ENCODE measurements at regions of chr10 and their contacts with region 1.

Region 1: DNA sequence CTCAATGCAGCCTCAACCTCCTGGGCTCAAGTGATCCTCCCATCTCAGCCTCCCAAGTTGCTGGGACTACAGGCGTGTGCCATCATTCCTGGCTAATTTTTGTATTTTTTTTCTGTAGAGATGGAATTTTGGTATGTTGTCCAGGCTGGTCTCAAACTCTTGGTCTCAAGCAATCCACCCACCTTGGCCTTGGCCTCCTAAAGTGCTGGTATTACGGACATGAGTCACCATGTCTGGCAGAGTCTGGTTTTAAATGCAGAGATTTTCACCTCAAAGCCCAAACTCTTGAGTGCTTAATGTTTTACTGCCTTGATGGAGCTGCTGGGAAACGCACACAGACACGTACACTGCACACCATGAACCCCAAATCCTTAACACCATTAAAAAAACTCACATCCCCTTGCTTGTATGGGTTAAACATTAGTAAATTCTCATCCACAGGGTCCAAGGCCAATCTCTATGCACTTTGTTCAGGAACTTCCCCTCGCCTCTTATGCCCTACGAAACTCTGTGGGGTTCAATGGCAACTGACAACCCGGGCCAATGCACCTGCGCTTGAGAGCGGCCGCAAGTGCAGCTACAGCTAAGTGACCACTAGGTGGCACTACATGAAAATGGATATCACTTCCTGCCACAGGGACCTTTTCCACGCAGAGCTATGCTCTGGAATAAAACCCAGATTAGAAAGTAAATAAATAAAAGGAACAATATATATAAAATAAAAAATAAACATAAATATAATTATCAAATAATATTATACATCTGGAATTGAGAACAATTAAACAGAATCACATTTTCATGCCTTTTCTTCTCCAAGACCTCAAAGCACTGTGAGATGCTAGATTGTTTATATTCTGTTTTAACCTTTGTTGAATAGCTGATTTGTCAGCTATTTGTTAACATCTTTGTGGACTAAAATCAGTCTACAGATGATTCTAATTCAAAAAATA is 66.9 kb upstream of the AFAP1L2 start:
- DNase-seq: peak; percentile 54
- H3K4me3 Mint-ChIP-seq: no peak overlapping the region
- H3K27ac Mint-ChIP-seq: no peak overlapping the region
- H3K4me1 Mint-ChIP-seq: peaks cover 31% of the 10 kb centered on the region
- H3K27me3 Mint-ChIP-seq: no peaks in the 10 kb centered on the region

Region 2: GRCh38 chr10:113866551-113867394 is 604.5 kb before region 1 on chr10:
- intact Hi-C with region 1: no loop called
- DNase-seq: no peak
- H3K4me3 Mint-ChIP-seq: no peak overlapping the region
- H3K27ac Mint-ChIP-seq: no peak overlapping the region
- H3K4me1 Mint-ChIP-seq: peaks cover 4% of the 10 kb centered on the region
- H3K27me3 Mint-ChIP-seq: no peaks in the 10 kb centered on the region

Region 3: DNA sequence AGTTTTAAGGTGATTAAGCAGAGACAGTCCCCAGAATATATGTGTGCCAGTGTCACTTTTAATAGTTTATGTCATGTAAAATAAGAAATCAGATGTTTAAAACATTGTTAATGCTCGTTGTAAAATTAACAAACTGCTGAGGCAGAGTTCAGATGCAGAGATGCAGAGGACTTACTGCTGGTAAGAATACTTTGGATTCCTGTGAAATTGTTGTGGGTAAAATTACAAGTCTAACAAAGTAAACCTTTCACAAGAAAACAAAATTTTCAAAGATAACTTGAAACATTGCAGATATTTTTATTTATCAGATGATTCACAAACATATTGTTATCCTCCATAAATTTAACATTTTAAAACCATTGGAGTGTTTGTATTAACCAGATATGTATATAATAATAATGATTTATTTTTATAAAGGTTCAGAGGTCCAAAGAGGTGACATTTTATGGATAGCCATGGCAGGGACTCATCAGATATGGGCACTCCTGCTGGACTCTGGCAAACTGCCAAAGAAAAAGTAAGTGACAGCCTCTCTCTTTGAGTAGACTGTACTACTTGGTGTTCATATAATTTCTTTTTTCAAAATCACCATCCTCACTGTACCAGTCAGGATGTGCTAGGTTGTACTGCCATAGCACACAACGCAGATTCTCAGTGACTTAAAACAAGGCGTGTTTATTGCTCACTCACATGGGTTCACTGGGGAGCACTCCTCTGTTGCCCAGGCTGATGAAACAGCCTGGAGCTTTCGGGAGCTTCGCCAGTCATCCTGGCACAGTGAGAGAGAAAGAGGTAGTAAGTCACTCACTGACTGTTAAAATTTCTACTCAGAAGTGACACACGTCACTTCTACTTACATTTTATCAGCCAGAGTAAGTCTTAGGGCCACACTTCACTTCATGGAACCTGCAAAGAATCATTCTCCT is 573.3 kb before region 1 on chr10:
- intact Hi-C with region 1: no loop called
- DNase-seq: no peak
- H3K4me3 Mint-ChIP-seq: no peak overlapping the region
- H3K27ac Mint-ChIP-seq: no peak overlapping the region
- H3K4me1 Mint-ChIP-seq: no peaks in the 10 kb centered on the region
- H3K27me3 Mint-ChIP-seq: no peaks in the 10 kb centered on the region

Region 4: GRCh38 chr10:114271779-114272167 is 199.5 kb before region 1 on chr10:
- intact Hi-C with region 1: no loop called
- DNase-seq: no peak
- H3K4me3 Mint-ChIP-seq: no peak overlapping the region
- H3K27ac Mint-ChIP-seq: no peak overlapping the region
- H3K4me1 Mint-ChIP-seq: no peaks in the 10 kb centered on the region
- H3K27me3 Mint-ChIP-seq: no peaks in the 10 kb centered on the region

Region 5: GRCh38 chr10:114499630-114500190 is 28.5 kb after region 1 on chr10:
- intact Hi-C with region 1: loop called (anchors 2 kb)
- DNase-seq: peak; percentile 59
- H3K4me3 Mint-ChIP-seq: peak overlapping the region; percentile 63
- H3K27ac Mint-ChIP-seq: peak overlapping the region; percentile 85
- H3K4me1 Mint-ChIP-seq: peaks cover 81% of the 10 kb centered on the region
- H3K27me3 Mint-ChIP-seq: no peaks in the 10 kb centered on the region

Region 6: GRCh38 chr10:114541081-114541796 is 70.0 kb after region 1 on chr10:
- intact Hi-C with region 1: loop called (anchors 1 kb)
- DNase-seq: peak; percentile 74
- H3K4me3 Mint-ChIP-seq: peak overlapping the region; percentile 61
- H3K27ac Mint-ChIP-seq: peak overlapping the region; percentile 90
- H3K4me1 Mint-ChIP-seq: peaks cover 82% of the 10 kb centered on the region
- H3K27me3 Mint-ChIP-seq: no peaks in the 10 kb centered on the region

Region 7: DNA sequence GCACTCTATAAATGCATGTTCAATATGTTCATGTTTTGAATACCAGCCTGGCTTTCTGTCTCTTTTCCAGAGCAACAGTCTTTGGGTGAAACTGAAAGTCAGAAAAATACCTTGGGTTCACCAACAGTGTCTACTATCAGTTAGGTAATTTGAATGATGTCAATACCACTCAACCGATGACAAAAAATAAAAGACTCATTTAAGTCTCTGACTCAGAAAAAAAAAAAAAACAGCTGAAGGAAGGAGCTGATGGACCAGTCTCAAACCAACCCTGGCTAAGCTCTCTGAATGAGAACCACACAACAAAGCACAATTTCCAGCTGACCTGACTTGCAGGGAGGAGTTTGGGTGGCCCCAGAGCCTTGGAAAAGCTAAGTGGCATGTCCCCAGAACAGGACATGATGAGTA is 144.4 kb after region 1 on chr10:
- intact Hi-C with region 1: loop called (anchors 5 kb)
- DNase-seq: no peak
- H3K4me3 Mint-ChIP-seq: peak overlapping the region; percentile 11
- H3K27ac Mint-ChIP-seq: peak overlapping the region; percentile 36
- H3K4me1 Mint-ChIP-seq: peaks cover 22% of the 10 kb centered on the region
- H3K27me3 Mint-ChIP-seq: peaks cover 9% of the 10 kb centered on the region

Region 8: GRCh38 chr10:114703377-114704107 is 232.3 kb after region 1 on chr10:
- intact Hi-C with region 1: loop called (anchors 1 kb)
- DNase-seq: no peak
- H3K4me3 Mint-ChIP-seq: no peak overlapping the region
- H3K27ac Mint-ChIP-seq: no peak overlapping the region
- H3K4me1 Mint-ChIP-seq: no peaks in the 10 kb centered on the region
- H3K27me3 Mint-ChIP-seq: peaks cover 28% of the 10 kb centered on the region

Region 9: DNA sequence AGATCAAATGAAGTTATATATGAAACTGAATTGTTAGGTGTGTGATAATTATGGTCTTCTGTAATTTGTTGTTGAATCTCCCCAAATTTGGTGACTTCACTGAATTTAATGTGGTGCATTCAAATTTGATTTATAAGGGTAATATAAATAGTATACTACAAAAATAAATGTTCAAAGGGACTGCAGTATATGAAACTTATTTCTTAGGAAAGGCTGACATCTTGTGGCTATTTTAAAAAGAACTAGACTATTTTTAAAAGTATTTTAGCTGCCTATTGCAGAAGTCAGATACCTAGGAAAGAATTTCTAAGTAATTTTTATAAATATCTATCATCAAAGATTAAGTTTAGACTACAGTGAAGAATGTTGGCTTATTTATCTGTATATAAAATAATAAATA is 658.5 kb after region 1 on chr10:
- intact Hi-C with region 1: loop called (anchors 10 kb)
- DNase-seq: no peak
- H3K4me3 Mint-ChIP-seq: no peak overlapping the region
- H3K27ac Mint-ChIP-seq: no peak overlapping the region
- H3K4me1 Mint-ChIP-seq: no peaks in the 10 kb centered on the region
- H3K27me3 Mint-ChIP-seq: peaks cover 3% of the 10 kb centered on the region